Cardiac septum (tissue), 1 donor: ENCODE measurements at regions of chr6 and their contacts with region 1.

Region 1: DNA sequence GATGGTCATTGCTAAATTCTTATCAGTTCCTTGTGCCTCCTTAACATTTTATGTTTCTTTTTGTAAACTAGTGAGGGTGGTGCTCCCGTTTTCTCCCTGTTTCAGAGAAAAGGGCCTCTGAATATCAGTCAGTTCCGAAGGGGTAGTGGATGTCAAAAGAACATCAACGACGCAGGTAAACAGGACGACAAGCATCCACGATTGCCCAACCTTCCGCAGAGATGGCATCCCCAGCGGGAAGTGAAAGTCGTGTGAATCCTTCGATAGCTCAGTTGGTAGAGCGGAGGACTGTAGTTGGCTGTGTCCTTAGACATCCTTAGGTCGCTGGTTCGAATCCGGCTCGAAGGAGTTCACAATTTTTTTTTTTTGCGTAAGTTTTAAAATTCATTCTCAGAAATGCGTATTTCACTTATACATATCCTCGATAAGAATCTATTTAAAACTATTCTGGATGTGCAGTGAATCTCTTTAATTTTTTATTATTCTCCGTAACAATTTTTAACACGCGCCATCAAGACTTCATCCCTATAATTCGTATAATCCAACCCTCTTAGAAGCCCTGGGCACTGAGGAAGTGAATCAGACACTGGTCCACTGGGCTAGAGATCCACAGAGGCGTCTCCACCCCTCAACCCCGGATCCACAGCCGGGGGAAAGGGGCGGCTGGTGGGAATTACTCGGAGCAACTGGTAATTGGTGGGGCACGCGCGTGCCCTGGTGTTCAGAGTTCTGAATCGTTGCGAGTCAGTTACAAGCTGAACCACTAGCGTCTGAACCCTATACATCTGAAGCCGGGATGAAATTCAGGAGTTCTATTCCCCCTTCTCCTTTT is 27.9 kb upstream of the ABT1 start:
- DNase-seq: peak; percentile 93

Region 2: DNA sequence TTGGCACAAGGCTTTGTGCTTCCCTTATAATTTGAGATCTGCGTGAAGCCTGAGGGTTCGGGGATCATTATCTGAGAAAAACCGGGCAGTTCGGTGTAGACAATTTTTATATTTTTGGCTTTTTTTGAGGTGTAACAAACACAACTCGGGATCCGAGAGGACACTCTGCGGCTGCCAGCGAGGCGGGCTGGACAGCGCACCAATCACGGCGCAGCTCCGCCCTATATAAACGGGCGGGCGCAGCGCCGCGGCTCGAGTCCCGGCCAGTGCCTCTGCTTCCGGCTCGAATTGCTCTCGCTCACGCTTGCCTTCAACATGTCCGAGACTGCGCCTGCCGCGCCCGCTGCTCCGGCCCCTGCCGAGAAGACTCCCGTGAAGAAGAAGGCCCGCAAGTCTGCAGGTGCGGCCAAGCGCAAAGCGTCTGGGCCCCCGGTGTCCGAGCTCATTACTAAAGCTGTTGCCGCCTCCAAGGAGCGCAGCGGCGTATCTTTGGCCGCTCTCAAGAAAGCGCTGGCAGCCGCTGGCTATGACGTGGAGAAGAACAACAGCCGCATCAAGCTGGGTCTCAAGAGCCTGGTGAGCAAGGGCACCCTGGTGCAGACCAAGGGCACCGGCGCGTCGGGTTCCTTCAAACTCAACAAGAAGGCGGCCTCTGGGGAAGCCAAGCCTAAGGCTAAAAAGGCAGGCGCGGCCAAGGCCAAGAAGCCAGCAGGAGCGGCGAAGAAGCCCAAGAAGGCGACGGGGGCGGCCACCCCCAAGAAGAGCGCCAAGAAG is 412.6 kb before region 1 on chr6:
- intact Hi-C with region 1: no loop called
- DNase-seq: peak; percentile 97

Region 3: DNA sequence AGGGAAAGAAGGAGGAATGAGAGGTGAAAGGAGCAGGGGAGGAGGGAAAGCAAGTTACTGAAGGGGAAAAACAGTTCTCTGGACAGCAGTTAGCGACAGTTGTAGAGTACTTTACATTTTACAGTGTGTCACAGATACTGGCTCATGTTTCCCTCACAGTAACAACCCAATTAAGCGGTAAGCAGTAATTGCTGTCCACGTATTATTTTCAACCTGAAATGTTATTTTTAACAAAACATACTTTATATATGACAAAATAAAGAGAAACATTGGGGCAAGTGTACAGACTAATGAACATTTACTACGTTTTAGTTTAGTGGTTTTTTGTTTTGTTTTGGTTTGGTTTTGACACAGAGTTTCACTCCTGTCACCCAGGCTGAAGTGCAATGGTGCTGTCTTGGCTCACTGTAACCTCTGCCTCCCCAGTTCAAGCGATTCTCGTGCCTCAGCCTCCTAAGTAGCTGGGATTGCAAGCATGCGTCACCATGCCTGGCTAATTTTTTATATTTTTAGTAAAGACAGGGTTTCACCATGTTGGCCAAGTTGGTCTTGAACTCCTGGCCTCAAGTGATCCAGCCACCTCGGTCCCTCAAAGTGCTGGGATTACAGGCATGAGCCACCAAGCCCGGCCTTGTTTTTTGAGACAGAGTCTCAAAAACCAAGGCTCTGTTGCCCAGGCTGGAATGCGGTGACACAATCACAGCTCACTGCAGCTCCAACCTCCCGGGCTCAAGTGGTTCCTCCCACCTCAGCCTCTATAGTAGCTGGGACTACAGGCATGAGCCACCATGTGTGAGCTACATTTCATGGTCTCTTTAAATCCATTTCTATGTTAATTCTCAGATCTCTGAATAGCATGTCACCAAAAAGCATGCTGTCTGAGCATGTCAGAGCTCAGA is 226.5 kb before region 1 on chr6:
- intact Hi-C with region 1: loop called (anchors 5 kb)
- DNase-seq: no peak

Region 4: GRCh38 chr6:26514984-26515383 is 53.8 kb before region 1 on chr6:
- intact Hi-C with region 1: no loop called
- DNase-seq: no peak

Region 5: DNA sequence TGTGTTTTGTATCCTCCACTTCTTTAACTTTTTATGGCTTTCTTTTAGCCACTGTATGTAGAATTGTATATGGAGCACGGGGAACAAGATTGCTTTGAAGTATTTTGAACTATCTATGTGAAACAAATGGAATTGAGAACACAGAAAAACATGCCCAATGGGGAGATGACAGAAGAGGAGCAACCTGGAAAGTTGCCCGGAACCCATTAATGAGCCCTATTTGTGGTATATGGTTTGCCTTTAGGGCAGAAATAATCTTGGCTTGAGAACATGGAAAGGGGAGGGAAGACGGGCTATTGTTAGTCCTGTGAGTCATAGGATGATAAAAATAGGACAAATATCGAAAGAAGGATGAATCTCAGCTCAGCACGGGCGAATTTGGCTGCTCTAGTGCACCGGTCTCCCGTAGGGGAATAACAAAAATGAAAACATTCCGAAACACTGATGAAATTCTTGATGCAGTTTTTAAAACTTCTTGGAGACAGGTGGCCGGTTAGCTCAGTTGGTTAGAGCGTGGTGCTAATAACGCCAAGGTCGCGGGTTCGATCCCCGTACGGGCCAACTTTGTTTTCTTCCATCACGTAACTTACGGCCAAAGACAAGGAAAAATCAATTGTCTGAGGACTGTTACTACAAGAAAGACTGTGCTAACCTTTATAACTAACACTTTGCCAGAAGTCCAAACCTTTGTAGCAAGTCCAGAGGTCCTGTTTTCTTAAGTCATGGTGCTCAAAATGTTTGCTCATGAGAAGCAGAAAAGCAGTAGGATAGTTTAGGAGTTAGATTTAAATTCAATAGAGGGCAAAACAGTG is 15.0 kb before region 1 on chr6:
- intact Hi-C with region 1: loop called (anchors 2 kb)
- DNase-seq: no peak